ENCODE measurements at regions of chr16 and their contacts with region 1.

Region 1: DNA sequence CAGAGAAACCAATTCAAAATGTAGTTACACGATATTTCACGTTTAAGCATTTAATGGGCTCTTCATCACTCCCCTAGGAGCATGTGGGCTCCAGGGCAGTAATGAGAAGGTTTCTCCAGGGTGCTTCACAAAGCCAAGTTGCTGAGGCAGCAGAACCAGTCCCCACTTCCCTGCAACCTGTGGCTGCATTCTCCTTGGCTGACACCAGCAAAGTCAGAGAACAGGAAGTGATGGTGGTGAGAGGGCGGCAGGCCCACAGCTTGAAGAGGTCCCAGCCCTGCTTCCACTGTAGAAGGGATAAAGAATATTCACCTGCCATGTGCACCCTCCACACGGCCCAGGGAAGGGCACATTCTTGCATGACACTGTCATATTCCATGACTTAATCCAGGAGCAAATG is 133.2 kb downstream of the CBLN1 start:
- DNase-seq: no peak
- ATAC-seq: no peak
- H3K4me3 ChIP-seq: no peak overlapping the region
- H3K27ac ChIP-seq: no peak overlapping the region
- H3K4me1 ChIP-seq: no peaks in the 10 kb centered on the region
- H3K27me3 ChIP-seq: no peaks in the 10 kb centered on the region
- CTCF ChIP-seq: no peak

Region 2: DNA sequence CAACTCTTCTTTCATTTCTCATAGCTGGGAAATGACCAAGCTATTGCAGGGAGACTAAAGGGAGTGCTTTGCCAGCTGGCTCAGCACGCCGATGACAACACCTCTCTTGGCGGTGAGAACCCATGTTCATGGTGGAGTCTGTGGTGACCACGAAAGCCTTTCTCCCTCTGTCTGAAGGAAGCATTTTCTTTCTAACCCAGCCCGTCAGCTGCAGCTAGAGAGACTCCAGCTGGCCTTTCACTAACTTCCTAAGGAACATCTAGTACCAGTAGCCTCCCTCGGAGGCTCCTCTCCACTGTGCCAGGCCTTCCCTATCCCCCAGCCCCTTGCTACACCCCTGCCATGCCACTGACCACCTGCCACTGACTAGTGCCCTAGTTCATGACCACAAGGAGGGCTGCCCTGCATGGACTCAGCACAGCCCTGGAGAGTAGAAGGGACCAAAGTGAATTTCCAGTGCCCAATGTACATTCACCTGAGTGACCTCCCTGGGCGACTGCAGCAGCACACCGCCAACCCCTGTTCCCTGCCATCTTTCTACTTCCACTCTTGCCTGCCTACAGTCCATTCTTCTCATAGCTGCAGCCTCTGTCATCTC is 51.9 kb after region 1 on chr16:
- intact Hi-C with region 1: loop called in 1 of 2 experiments (anchors 10 kb)
- DNase-seq: peak; percentile 47 to 69
- ATAC-seq: no peak
- H3K4me3 ChIP-seq: no peak overlapping the region
- H3K27ac ChIP-seq: no peak overlapping the region
- H3K4me1 ChIP-seq: no peaks in the 10 kb centered on the region
- H3K27me3 ChIP-seq: peaks cover 0 to 2% (median 0%) of the 10 kb centered on the region in 3 donors
- CTCF ChIP-seq: no peak

Region 3: DNA sequence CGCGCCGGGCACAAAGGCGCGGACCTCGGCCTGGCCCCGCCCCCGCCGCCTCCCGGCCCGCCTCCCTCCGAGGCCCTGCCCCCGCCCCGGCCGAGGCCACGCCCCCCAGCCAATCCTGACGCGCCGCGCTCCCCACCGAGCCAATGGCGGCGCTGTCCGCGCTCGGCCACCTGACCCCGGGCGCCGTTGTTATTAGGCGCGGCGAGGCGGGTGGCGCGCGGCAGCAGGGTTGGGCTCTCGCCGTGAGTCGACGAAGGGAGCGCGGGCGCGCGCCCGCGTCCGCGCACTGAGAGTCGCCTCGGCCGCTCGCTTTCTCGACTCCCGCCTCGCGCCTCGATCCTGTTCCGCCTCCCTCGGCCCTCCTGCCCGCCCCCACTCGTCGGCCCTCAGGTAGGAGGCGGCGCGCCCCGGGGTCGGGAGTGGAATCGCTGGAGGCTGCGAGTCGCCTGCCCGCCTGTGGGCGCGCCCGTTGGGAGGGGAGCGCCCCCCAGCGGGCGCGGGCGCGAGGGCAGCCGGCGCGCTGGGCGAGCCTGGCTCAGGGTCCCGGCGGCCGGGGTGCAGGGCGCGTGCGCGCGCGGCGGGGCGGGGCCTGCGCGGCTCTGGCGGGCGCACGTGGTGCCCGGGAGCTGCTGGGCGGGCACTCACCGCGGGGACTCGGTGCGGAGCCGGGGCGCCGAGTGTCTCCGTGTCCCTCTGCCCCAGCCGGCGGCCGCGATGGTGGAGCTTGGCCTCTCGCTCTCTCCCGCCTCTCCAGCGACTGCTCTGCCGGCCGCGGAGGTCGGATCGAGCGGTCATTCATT is 133.6 kb after region 1 on chr16:
- intact Hi-C with region 1: no loop called
- DNase-seq: peak; percentile 81 to 89
- ATAC-seq: peak; percentile 98 to 99 (median 99)
- H3K4me3 ChIP-seq: peak overlapping the region; percentile 67
- H3K27ac ChIP-seq: no peak overlapping the region
- H3K4me1 ChIP-seq: peaks cover 26% of the 10 kb centered on the region
- H3K27me3 ChIP-seq: peaks cover 7 to 92% (median 42%) of the 10 kb centered on the region in 3 donors
- CTCF ChIP-seq: peak; percentile 20

Region 4: GRCh38 chr16:49382916-49383315 is 234.5 kb after region 1 on chr16:
- intact Hi-C with region 1: no loop called
- DNase-seq: no peak
- ATAC-seq: no peak
- H3K4me3 ChIP-seq: no peak overlapping the region
- H3K27ac ChIP-seq: no peak overlapping the region
- H3K4me1 ChIP-seq: no peaks in the 10 kb centered on the region
- H3K27me3 ChIP-seq: peaks cover 0 to 3% (median 0%) of the 10 kb centered on the region in 3 donors
- CTCF ChIP-seq: no peak

Measured in psoas muscle (tissue), 8 donors.